Sciatic nerve (tissue), 2 donors: ENCODE measurements at regions of chr15 and their contacts with region 1.

Region 1: GRCh38 chr15:90839187-90840071 is 29.0 kb upstream of the FURIN start:
- DNase-seq: no peak
- ATAC-seq: peak; percentile 69

Region 2: GRCh38 chr15:90557186-90558084 is 282.0 kb before region 1 on chr15:
- intact Hi-C with region 1: no loop called
- DNase-seq: peak; percentile 84
- ATAC-seq: peak; percentile 75

Region 3: DNA sequence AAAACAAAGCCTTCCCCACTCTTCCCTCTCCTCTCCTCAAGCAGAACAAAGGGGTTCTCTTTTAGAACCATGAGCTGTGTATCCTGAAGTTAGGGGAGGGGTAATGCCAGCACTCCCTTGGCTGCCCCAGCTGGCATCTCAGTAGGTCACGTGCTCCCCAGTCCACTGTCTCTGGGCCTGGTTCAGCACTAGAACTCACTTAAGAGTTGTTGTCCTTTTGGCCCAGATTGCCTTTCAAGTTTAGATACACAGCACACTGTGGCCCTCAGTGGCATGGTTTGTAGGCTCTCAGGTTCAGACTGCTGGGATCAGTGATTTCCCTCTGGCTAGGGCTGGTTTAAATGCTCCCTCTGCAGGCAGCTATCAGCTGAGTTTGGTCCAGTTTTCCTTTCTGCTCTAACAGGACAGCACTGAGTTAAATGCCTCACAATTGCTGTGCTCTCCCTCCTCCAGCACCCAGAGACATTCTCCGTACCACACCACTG is 1365.9 kb after region 1 on chr15:
- intact Hi-C with region 1: loop called (anchors 5 kb)
- DNase-seq: no peak
- ATAC-seq: no peak